ENCODE measurements at regions of chr1 and their contacts with region 1.

Region 1: DNA sequence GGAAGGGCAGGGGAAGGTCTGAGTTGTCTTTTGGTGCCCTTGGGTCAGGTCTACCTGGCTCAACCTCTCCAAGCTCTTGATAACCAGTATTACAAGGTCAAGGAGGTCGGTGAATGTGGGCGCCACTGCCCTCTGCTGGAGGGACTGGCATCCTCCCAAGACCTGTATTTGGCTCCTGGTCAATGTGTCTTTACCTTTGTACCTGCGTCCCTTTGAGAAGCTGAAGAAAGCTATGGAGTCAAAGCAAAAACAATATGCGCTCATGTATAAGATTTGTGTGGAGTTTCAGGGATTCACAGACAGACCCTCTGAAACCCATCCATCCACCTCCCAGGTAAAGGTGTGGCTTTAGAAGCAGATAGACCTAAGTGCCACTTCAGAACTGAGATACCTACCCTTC is 61.8 kb upstream of the NBL1 start:
- DNase-seq: peak; percentile 63
- ATAC-seq: peak; percentile 88
- H3K4me3 Mint-ChIP-seq: no peak overlapping the region
- H3K27ac Mint-ChIP-seq: no peak overlapping the region
- H3K4me1 Mint-ChIP-seq: peaks cover 9% of the 10 kb centered on the region
- H3K27me3 Mint-ChIP-seq: no peaks in the 10 kb centered on the region
- CTCF ChIP-seq: no peak

Region 2: DNA sequence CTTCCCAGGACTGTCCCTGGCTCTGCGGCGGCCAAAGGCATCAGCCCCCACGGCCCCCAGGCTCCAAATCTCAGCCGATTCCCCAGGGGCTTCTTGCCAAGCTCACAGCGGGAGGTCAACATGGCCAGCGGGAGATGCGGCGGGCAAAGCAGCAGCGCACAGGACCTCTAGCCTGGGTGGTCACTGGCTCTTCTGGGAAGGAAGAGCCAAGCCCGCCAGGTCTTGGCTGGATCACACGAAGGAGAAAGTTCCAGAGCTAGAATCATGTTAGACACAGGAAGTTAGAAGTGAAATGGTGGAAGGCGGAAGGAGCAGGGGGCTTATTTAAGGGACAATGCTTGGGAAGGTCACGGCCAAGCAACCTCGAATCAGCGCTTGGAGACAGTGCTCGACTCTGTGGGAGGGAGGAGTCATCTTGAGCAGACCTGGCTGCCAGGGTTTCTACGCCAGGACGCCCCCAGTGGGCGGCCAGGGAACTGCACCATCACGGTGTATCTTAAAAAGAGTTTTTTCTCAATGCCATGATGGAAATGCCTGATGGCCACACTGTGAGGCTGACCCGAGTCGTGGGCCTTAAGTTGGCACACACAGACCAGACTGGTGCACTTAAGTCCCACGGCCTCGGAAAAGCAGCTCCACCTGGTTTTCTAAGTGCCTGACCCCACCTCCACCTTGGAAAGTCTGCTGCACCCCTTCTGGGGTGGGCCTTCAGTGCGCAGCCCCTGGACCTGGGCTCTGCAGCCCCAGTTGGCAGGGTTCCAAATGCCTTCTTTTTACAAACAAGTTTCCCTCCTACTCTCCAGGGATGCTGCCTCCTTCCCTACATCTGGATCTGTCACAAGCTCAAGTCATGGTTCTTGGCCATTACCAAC is 240.9 kb before region 1 on chr1:
- CTCF ChIA-PET with region 1: interaction called, 4 read pairs
- POLR2A ChIA-PET with region 1: no interaction called
- intact Hi-C with region 1: loop called (anchors 1 kb)
- DNase-seq: peak; percentile 64
- ATAC-seq: peak; percentile 85
- H3K4me3 Mint-ChIP-seq: no peak overlapping the region
- H3K27ac Mint-ChIP-seq: peak overlapping the region; percentile 35
- H3K4me1 Mint-ChIP-seq: no peaks in the 10 kb centered on the region
- H3K27me3 Mint-ChIP-seq: no peaks in the 10 kb centered on the region
- CTCF ChIP-seq: no peak

Region 3: DNA sequence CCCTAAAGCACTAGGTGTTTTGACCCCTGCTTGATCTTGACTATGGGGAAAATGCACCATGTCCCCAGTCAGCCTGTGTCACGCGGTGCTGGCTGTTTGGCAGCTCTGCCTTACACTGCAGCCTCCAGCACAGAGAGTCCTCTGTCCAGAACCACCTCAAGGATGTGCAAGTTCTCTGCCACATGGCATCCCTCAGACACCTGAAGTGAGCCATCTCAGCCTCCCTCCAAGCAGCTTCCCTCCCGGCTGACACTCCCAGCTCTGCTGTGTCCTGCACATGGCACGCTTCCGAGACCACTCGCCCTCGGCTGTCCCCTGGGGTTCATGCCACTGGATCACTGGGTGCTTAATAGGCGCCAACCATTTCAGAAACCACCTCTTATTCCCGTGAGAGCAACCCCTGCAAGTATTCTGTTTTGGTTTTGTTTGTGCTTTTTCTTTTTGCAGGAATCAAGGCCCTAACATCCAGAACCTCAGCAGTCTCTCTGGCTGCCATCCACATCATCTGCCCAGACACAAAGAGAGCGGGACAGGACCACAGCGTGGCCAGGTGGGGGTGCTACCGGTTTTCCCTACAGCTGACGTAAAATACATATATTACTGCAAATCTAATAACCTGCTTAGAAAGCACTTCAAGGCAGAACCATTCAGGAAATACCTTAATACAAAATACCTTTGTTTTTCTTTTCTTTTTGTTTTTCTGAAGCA is 142.7 kb before region 1 on chr1:
- CTCF ChIA-PET with region 1: interaction called, 6 read pairs
- POLR2A ChIA-PET with region 1: no interaction called
- intact Hi-C with region 1: loop called (anchors 1 kb)
- DNase-seq: no peak
- ATAC-seq: peak; percentile 54
- H3K4me3 Mint-ChIP-seq: no peak overlapping the region
- H3K27ac Mint-ChIP-seq: no peak overlapping the region
- H3K4me1 Mint-ChIP-seq: peaks cover 78% of the 10 kb centered on the region
- H3K27me3 Mint-ChIP-seq: no peaks in the 10 kb centered on the region
- CTCF ChIP-seq: no peak